Activated CD8-positive, alpha-beta T cell treated with anti-CD3 and anti-CD28 coated beads, Interleukin-2, amount 10 ng/mL, durations not matched to agents 7 days and 5 days (primary cell): ENCODE measurements at regions of chr7 and their contacts with region 1.

Region 1: GRCh38 chr7:128425850-128426249 is 16.1 kb upstream of the IMPDH1 start:
- DNase-seq: peak; percentile 87
- ATAC-seq: peak; percentile 78
- H3K4me3 Mint-ChIP-seq: no peak overlapping the region
- H3K27ac Mint-ChIP-seq: no peak overlapping the region
- H3K4me1 Mint-ChIP-seq: peaks cover 12% of the 10 kb centered on the region
- H3K27me3 Mint-ChIP-seq: peaks cover 5% of the 10 kb centered on the region

Region 2: GRCh38 chr7:128343554-128344430 is 82.1 kb before region 1 on chr7 and contains the start of gene RBM28:
- CTCF ChIA-PET with region 1: interaction called, 48 read pairs
- POLR2A ChIA-PET with region 1: no interaction called
- DNase-seq: peak; percentile 90
- ATAC-seq: peak; percentile 98
- H3K4me3 Mint-ChIP-seq: peak within 1 kb of the TSS; percentile 91
- H3K27ac Mint-ChIP-seq: peak within 1 kb of the TSS; percentile 93
- H3K4me1 Mint-ChIP-seq: peaks cover 23% of the 10 kb centered on the region
- H3K27me3 Mint-ChIP-seq: peaks cover 12% of the 10 kb centered on the region
- total RNA-seq, gene RBM28: 40.4 to 43.3 TPM

Region 3: DNA sequence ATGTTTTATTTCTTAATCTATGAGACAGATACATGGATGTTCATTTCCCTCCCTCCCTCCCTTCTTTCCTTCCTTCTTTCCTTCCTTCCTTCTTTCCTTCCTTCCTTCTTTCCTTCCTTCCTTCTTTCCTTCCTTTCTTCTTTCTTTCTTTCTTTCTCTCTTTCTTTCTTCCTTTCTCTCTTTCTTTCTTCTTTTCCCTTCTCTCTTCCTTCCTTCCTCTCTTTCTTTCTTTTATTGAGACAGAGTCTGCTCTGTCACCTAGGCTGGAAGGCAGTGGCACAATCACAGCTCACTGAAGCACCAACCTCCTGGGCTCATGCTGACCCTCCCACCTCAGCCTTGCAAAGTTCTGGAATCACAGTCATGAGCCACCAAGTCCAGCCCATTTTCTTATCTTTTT is 58.9 kb before region 1 on chr7:
- CTCF ChIA-PET with region 1: no interaction called
- POLR2A ChIA-PET with region 1: no interaction called
- DNase-seq: no peak
- ATAC-seq: no peak
- H3K4me3 Mint-ChIP-seq: no peak overlapping the region
- H3K27ac Mint-ChIP-seq: no peak overlapping the region
- H3K4me1 Mint-ChIP-seq: peaks cover 7% of the 10 kb centered on the region
- H3K27me3 Mint-ChIP-seq: peaks cover 60% of the 10 kb centered on the region

Region 4: DNA sequence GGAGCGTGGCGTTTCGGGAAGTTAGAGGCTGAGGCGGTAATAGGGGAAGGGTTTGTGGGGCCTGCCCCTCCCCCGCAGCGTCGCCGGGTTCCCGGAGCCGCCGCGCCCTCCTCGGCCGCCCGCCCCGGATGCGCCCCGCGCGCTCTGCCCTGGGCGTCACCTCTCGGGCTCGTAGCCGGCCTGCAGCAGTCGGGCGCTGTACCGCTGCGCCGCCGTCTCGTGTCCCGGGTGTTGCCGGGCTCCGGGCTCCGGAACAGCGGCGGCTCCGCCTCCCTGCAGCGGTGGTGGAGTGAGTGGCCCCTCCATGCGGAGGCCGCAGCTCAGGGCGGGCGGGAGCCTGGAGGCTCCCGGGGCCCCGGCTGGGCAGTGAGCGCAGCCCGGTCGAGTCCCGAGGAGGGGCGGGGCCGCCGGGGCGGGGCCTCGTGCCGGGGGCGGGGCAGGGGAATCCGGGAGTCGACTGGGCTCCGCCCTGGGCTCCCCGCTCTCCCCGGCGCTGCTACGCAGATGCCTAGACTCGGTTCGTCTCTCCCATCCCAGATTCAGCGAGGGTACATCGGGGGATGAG is 16.2 kb before region 1 on chr7 and contains the start of gene IMPDH1:
- CTCF ChIA-PET with region 1: interaction called, 432 read pairs
- POLR2A ChIA-PET with region 1: no interaction called
- DNase-seq: peak; percentile 87
- ATAC-seq: peak; percentile 88
- H3K4me3 Mint-ChIP-seq: peak within 1 kb of the TSS; percentile 88
- H3K27ac Mint-ChIP-seq: peak within 1 kb of the TSS; percentile 77
- H3K4me1 Mint-ChIP-seq: peaks cover 31% of the 10 kb centered on the region
- H3K27me3 Mint-ChIP-seq: peaks cover 21% of the 10 kb centered on the region
- total RNA-seq, gene IMPDH1: 75.3 to 80.8 TPM

Region 5: DNA sequence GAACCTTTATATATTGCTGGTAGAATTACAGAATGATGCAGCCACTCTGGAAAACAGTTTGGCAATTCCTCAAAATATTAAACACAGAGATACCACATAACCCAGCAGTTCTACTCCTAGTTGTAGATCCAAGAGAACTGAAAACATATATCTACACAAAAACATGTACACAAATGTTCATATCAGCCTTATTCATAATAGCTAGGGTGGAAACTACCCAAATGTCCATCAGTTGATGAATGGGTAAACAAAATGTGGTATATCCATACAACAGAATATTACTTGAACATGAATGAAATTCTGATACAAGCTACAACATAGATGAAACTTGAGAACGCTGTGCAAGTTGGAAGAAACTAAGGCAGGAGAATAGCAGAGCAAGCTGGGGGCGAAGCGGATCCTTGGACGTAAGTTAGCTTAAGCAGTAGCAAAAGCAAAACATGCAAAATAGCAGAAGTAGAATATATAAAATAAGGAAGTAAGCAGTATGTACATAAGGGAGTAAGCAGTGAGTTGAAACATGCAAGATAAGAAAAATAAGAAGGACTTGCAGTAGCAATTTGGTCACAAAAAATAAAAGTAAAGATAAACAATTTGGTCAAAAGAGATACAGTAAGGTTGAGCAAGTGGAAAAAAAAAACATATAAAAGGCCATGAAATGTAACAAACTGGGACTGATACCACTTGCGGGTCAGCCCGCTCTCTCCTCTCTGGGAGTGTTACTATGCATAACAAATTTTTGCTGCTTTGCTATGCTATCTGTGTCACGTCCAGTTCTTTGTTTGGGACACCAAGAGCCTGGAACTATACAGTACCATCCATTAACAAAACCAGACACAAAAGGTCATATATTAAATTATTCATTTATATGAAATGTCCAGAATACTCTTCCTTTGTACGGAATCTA is 11.8 kb after region 1 on chr7:
- CTCF ChIA-PET with region 1: interaction called, 99 read pairs
- POLR2A ChIA-PET with region 1: no interaction called
- DNase-seq: no peak
- ATAC-seq: no peak
- H3K4me3 Mint-ChIP-seq: no peak overlapping the region
- H3K27ac Mint-ChIP-seq: no peak overlapping the region
- H3K4me1 Mint-ChIP-seq: no peaks in the 10 kb centered on the region
- H3K27me3 Mint-ChIP-seq: peaks cover 16% of the 10 kb centered on the region

Region 6: DNA sequence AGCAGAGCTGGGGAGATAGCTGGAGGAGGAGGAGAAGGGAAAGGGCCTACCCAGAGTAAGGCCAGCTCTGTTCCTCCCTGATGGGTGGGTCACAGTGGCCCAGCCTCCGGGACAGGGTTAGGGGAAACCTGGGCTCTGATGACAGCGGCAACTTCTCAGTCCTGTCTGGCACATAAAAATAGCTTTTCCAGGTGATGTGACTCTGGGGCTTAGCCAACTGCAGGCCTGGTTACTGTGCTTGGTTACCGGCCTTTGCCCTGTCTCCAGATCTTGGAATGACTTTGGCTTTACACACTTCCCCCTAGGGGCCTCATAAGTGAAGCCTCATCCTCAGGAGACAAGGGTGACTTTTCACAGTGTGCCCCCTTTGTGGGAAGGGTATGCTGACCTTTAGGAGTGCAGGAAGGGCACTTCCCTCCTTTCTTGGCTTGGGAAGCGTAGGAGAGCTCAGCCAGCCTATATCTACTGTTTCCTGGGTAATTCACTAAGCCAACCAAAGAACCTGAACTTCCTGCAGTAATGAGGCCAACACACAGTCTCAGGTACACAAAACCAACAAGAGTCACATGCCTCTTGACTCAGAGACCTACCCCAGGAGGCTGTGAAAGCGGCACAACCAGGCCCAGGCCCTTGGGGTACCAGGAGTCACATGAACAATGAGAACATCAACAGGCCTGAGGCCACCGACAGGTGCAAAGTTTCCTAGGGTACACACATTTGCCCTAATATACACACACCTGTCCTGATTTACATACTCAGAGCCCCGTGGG is 18.2 kb after region 1 on chr7:
- CTCF ChIA-PET with region 1: interaction called, 99 read pairs
- POLR2A ChIA-PET with region 1: no interaction called
- DNase-seq: no peak
- ATAC-seq: no peak
- H3K4me3 Mint-ChIP-seq: no peak overlapping the region
- H3K27ac Mint-ChIP-seq: no peak overlapping the region
- H3K4me1 Mint-ChIP-seq: peaks cover 7% of the 10 kb centered on the region
- H3K27me3 Mint-ChIP-seq: peaks cover 6% of the 10 kb centered on the region

Region 7: GRCh38 chr7:128450409-128450808 is 24.6 kb after region 1 on chr7:
- CTCF ChIA-PET with region 1: interaction called, 52 read pairs
- POLR2A ChIA-PET with region 1: interaction called, 8 read pairs
- DNase-seq: no peak
- ATAC-seq: no peak
- H3K4me3 Mint-ChIP-seq: peak overlapping the region; percentile 4
- H3K27ac Mint-ChIP-seq: no peak overlapping the region
- H3K4me1 Mint-ChIP-seq: peaks cover 25% of the 10 kb centered on the region
- H3K27me3 Mint-ChIP-seq: peaks cover 9% of the 10 kb centered on the region

Region 8: DNA sequence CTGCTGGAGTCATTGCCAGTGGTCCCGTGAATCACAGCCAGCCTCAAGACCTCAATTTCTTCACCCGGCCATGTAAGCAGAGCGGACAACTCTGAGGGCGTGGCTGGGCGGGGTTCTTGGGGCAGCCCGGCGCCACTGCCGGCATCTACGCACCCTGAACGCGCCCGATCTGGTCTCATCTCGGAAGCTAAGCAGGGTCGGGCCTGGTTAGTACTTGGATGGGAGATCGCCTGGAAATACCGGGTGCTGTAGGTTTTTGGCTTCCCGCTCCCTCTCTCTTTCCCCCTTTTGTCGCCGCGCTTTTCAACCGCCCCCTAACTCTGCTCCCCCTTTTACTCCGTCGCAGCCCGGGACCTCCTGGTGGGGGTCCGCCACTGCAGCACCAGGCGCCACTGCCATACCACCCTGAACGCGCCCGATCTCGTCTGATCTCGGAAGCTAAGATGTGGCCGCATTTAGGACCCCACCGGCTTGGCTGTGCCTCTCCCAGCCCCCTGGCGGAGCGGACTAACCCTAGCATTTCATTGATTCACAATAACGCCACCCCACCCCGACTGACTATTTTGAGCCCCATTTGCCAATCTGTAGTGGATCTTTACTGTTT is 271.6 kb after region 1 on chr7:
- CTCF ChIA-PET with region 1: no interaction called
- POLR2A ChIA-PET with region 1: no interaction called
- DNase-seq: peak; percentile 74
- ATAC-seq: peak; percentile 90
- H3K4me3 Mint-ChIP-seq: peak overlapping the region; percentile 80
- H3K27ac Mint-ChIP-seq: peak overlapping the region; percentile 71
- H3K4me1 Mint-ChIP-seq: peaks cover 12% of the 10 kb centered on the region
- H3K27me3 Mint-ChIP-seq: peaks cover 57% of the 10 kb centered on the region